ENCODE measurements at regions of chr11 and their contacts with region 1.

Region 1: GRCh38 chr11:3341298-3341697 is 37.6 kb downstream of the ZNF195 start:
- DNase-seq: peak; percentile 86
- H3K4me3 Mint-ChIP-seq: no peak overlapping the region
- H3K27ac Mint-ChIP-seq: no peak overlapping the region
- H3K4me1 Mint-ChIP-seq: no peaks in the 10 kb centered on the region
- H3K27me3 Mint-ChIP-seq: peaks cover 40% of the 10 kb centered on the region

Region 2: DNA sequence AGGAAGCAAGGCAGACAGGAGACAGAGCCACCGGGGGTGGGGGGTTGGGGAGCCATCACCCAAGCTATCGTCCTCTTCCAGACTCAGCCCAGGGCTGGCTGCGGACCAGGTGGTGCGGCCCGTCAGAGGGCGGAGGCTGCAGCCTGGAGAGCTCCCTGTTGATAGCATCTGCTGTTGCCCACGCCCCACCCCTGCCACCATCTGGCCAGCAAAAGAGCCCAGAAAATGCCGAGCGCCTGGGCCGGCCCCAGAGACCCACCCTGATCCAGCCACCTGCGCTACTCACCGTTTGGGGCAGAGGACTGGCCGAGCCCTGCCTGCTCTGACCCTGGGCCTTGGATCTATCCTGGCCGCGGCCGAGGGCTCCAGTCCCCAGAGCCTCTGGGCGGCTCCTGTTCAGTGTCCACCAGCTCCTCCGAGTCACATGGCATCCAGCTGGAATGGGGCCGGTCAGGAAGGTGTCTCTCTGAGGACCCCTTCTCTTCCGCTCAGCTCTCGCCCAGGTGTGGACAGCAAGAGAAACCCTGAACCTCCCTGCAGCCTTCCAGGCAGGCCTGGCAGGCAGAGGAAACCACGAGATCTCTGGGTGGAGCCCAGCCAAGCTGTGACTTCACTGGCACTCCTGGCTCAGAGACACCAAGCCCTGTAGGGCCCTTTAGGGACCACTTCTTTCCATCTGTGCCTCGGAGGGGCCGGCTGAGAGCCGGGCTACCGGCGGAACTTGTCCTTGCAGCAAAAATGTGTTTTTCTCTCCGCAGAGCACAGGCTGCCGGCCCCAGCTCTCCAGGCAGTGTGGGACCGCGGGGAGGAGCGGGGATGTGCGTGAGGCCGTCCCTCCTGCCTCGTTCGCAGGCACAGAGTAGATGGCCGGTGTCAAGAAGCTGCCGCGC is 109.2 kb before region 1 on chr11 and contains the start of gene MRGPRE:
- CTCF ChIA-PET with region 1: no interaction called
- intact Hi-C with region 1: no loop called
- DNase-seq: no peak
- H3K4me3 Mint-ChIP-seq: no peak within 1 kb of the TSS
- H3K27ac Mint-ChIP-seq: no peak within 1 kb of the TSS
- H3K4me1 Mint-ChIP-seq: no peaks in the 10 kb centered on the region
- H3K27me3 Mint-ChIP-seq: no peaks in the 10 kb centered on the region
- total RNA-seq, gene MRGPRE: not detected

Region 3: GRCh38 chr11:3245071-3245470 is 96.2 kb before region 1 on chr11:
- CTCF ChIA-PET with region 1: no interaction called
- intact Hi-C with region 1: no loop called
- DNase-seq: no peak
- H3K4me3 Mint-ChIP-seq: no peak overlapping the region
- H3K27ac Mint-ChIP-seq: no peak overlapping the region
- H3K4me1 Mint-ChIP-seq: no peaks in the 10 kb centered on the region
- H3K27me3 Mint-ChIP-seq: peaks cover 2% of the 10 kb centered on the region

Region 4: DNA sequence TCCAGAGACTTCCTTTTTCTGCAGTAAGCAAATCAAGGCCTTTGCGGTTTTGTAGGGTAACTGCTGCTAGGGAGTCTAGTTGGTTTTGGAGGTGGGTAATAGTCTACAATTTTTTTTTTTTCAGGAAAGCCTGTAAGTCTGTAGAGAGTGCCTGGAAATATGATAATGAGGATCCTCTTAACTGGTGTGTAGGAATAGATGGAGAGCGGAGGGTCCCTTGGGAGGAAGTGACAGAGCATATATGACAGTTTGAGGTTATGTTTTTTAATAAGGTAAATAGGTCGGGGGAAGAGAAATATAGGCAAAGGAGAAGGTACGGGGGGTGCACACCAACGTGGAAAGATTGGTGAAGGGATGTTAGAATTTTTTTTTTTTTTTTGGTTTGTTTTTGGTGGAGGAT is 11.8 kb after region 1 on chr11:
- CTCF ChIA-PET with region 1: interaction called, 16 read pairs
- intact Hi-C with region 1: no loop called
- DNase-seq: no peak
- H3K4me3 Mint-ChIP-seq: no peak overlapping the region
- H3K27ac Mint-ChIP-seq: no peak overlapping the region
- H3K4me1 Mint-ChIP-seq: no peaks in the 10 kb centered on the region
- H3K27me3 Mint-ChIP-seq: no peaks in the 10 kb centered on the region

Region 5: DNA sequence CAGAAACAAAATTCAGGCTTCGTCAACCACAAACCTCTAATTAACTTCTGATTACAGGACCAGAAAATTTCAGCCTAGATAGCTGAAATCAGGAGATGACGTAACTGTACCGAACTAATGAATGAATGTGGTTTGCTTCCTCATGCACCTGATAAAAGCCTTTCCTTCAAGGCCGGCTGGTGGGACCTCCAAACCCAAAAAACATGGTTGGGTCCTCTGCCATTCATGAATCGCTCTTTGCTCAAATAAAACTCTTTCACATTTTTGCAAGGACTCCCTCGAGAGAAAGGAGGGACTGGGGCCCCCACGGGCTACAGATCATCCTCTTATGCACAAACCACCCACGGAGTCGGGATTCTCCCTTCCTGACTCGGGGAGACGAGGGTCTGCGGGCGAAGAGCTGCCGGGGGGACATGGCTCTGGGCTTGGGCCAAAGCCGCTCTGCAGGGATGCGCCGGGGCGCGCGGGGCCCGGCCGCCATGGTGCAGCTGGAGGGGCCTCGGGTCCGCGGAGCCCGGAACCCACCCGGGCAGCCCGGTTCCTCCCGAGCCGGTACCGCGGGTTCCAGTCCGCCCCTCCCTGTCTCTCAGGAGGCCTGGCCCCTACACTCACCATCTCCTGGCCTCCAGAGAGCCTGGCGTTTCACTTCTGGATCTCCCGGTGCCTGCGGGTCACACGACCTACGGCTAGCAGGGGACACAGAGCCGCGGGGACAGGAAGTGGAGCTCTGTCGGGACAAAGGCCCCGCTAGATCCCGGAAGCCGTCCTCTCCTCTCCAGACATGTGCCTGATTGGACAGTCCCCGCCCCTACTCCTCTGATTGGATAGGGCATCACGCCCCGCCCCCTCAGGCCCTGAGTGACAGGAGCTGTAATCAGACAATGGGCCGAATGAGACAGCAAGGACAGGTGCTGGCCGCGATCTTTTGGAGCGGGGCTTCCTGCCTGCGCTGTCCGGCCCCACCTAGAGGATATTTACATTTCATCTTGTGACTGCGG is 37.4 kb after region 1 on chr11 and contains the start of gene ZNF195:
- CTCF ChIA-PET with region 1: interaction called, 14 read pairs
- intact Hi-C with region 1: no loop called
- DNase-seq: peak; percentile 100
- H3K4me3 Mint-ChIP-seq: peak within 1 kb of the TSS; percentile 97
- H3K27ac Mint-ChIP-seq: peak within 1 kb of the TSS; percentile 94
- H3K4me1 Mint-ChIP-seq: peaks cover 48% of the 10 kb centered on the region
- H3K27me3 Mint-ChIP-seq: no peaks in the 10 kb centered on the region
- total RNA-seq, gene ZNF195: 26.7 to 29.2 TPM

Region 6: GRCh38 chr11:3412837-3413236 is 71.5 kb after region 1 on chr11:
- CTCF ChIA-PET with region 1: interaction called, 77 read pairs
- intact Hi-C with region 1: no loop called
- DNase-seq: no peak
- H3K4me3 Mint-ChIP-seq: no peak overlapping the region
- H3K27ac Mint-ChIP-seq: no peak overlapping the region
- H3K4me1 Mint-ChIP-seq: peaks cover 2% of the 10 kb centered on the region
- H3K27me3 Mint-ChIP-seq: no peaks in the 10 kb centered on the region

Region 7: GRCh38 chr11:3781423-3781822 is 440.1 kb after region 1 on chr11:
- CTCF ChIA-PET with region 1: no interaction called
- intact Hi-C with region 1: no loop called
- DNase-seq: no peak
- H3K4me3 Mint-ChIP-seq: no peak overlapping the region
- H3K27ac Mint-ChIP-seq: peak overlapping the region; percentile 68
- H3K4me1 Mint-ChIP-seq: peaks cover 45% of the 10 kb centered on the region
- H3K27me3 Mint-ChIP-seq: no peaks in the 10 kb centered on the region

Region 8: DNA sequence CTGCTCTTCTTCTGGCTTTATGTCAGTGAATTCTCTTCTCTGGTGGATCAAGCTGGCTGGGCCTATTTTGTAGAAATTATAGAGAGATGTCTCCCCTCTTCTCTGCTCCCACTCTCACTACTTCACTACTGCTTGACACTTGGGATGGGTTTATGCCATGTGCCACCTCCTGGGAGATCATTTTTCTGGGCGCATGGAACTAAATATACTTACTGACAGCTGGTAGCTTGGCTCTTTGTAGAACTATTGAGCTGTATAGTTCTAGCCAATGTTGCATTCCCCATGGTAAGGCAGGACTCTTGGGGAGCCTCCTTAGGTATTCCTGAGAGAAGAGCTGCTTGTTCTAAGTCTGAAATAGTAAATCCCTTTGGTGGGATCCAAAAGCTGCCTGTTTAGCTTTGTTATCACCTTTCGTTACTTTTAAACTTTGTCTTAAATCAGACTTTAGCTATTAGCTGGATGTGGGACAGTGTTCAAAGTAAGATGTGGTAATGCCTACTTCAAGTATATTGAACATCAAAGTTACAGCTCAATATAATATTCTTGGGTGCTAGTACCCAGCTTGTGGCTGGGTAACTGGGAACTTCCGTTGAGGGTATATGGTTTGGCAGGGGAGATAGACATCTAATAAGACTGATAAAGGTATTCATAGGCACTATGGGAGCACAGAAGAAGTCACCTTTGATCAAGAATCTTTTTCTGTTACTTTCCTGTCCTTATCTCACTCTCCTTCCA is 665.8 kb after region 1 on chr11:
- CTCF ChIA-PET with region 1: no interaction called
- intact Hi-C with region 1: no loop called
- DNase-seq: no peak
- H3K4me3 Mint-ChIP-seq: no peak overlapping the region
- H3K27ac Mint-ChIP-seq: no peak overlapping the region
- H3K4me1 Mint-ChIP-seq: peaks cover 21% of the 10 kb centered on the region
- H3K27me3 Mint-ChIP-seq: no peaks in the 10 kb centered on the region